CD4-positive, alpha-beta T cell (primary cell): ENCODE measurements at regions of chr17 and their contacts with region 1.

Region 1: GRCh38 chr17:54836723-54837462 is 63.8 kb upstream of the TOM1L1 start:
- DNase-seq: no peak
- ATAC-seq: no peak
- H3K4me3 ChIP-seq: no peak overlapping the region
- H3K4me3 Mint-ChIP-seq: no peak overlapping the region
- H3K27ac ChIP-seq: no peak overlapping the region
- H3K27ac Mint-ChIP-seq: no peak overlapping the region
- H3K4me1 ChIP-seq: no peaks in the 10 kb centered on the region
- H3K4me1 Mint-ChIP-seq: no peaks in the 10 kb centered on the region
- H3K27me3 ChIP-seq: no peaks in the 10 kb centered on the region
- H3K27me3 Mint-ChIP-seq: peaks cover 12% of the 10 kb centered on the region
- CTCF ChIP-seq: no peak

Region 2: GRCh38 chr17:54864636-54865356 is 27.9 kb after region 1 on chr17:
- CTCF ChIA-PET with region 1: no interaction called
- POLR2A ChIA-PET with region 1: no interaction called
- intact Hi-C with region 1: loop called in 1 of 2 experiments (anchors 2 kb)
- DNase-seq: no peak
- ATAC-seq: no peak
- H3K4me3 ChIP-seq: no peak overlapping the region
- H3K4me3 Mint-ChIP-seq: no peak overlapping the region
- H3K27ac ChIP-seq: no peak overlapping the region
- H3K27ac Mint-ChIP-seq: no peak overlapping the region
- H3K4me1 ChIP-seq: no peaks in the 10 kb centered on the region
- H3K4me1 Mint-ChIP-seq: no peaks in the 10 kb centered on the region
- H3K27me3 ChIP-seq: peaks cover 0 to 2% of the 10 kb centered on the region in 2 experiments
- H3K27me3 Mint-ChIP-seq: peaks cover 4% of the 10 kb centered on the region
- CTCF ChIP-seq: no peak

Region 3: GRCh38 chr17:54900457-54901229 is 63.8 kb after region 1 on chr17 and contains the start of gene TOM1L1:
- CTCF ChIA-PET with region 1: no interaction called
- POLR2A ChIA-PET with region 1: no interaction called
- intact Hi-C with region 1: no loop called
- DNase-seq: peak in 8 of 14 experiments; percentile 1 to 42 (median 16)
- ATAC-seq: peak; percentile 79
- H3K4me3 ChIP-seq: peak within 1 kb of the TSS; percentile 31
- H3K4me3 Mint-ChIP-seq: peak within 1 kb of the TSS; percentile 55
- H3K27ac ChIP-seq: no peak within 1 kb of the TSS
- H3K27ac Mint-ChIP-seq: no peak within 1 kb of the TSS
- H3K4me1 ChIP-seq: peaks cover 11% of the 10 kb centered on the region
- H3K4me1 Mint-ChIP-seq: peaks cover 8% of the 10 kb centered on the region
- H3K27me3 ChIP-seq: peaks cover 15 to 21% of the 10 kb centered on the region in 2 experiments
- H3K27me3 Mint-ChIP-seq: peaks cover 41% of the 10 kb centered on the region
- CTCF ChIP-seq: no peak
- total RNA-seq, gene TOM1L1: not detected